A673 (cell line): ENCODE measurements at regions of chr2 and their contacts with region 1.

Region 1: DNA sequence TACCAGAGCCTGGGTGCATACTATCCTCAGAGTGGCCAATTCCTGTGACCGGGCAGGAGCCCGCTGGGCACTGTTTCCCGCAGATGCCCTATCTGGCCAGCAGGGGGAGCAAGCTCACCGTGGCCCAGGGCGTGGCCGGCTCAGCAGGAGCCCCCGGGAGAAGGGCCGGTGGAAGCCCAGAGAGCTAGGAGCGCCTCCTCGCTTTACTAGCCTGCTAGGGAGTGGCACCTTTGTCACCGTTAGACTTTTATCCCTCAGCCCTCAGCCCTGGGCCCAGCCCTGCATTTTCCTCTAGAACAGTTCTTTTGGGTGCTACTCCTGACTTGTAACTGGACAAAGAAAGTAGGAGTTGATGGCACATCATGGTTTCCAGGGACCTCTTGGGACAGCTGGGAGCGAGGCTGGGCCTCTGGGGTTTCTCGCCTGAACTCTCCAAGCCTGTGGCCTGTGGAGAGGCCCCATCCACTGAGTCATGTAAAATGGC is 24.0 kb downstream of the TMEM177 start:
- DNase-seq: peak; percentile 74
- H3K4me3 ChIP-seq: no peak overlapping the region
- H3K27ac ChIP-seq: no peak overlapping the region
- H3K4me1 ChIP-seq: peaks cover 5% of the 10 kb centered on the region
- H3K27me3 ChIP-seq: no peaks in the 10 kb centered on the region
- CTCF ChIP-seq: peak; percentile 95

Region 2: DNA sequence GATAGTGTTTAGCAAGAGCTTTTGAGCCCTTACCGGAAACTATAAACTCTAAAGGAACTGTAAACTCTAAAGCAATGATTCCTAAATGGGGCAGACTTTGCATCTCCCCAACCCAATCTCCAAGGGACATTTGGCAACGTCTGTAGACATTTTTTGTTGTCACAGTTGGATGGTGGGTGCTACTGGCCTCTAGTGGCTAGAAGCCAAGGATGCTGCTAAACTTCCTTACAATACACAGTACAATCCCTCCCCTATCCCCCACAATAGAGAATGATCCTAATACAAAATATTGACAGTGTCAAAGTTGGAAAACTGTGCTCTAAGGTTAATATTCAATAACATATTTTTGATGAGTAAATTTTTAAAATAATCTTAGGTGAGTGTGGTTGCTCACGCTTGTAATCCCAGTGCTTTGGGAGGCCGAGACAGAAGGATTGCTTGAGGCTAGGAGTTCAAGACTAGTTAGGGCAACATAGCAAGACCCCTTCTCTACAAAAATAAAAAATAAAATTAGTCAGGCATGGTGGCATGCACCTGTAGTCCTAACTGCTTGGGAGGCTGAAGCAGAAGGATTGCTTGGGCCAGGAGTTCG is 123.5 kb after region 1 on chr2:
- CTCF ChIA-PET with region 1: interaction called, 5 read pairs
- POLR2A ChIA-PET with region 1: no interaction called
- intact Hi-C with region 1: loop called (anchors 5 kb)
- DNase-seq: peak; percentile 84
- H3K4me3 ChIP-seq: no peak overlapping the region
- H3K27ac ChIP-seq: peak overlapping the region; percentile 0
- H3K4me1 ChIP-seq: peaks cover 12% of the 10 kb centered on the region
- H3K27me3 ChIP-seq: no peaks in the 10 kb centered on the region
- CTCF ChIP-seq: peak; percentile 81

Region 3: GRCh38 chr2:119897736-119898395 is 194.9 kb after region 1 on chr2:
- CTCF ChIA-PET with region 1: no interaction called
- POLR2A ChIA-PET with region 1: no interaction called
- intact Hi-C with region 1: no loop called
- DNase-seq: no peak
- H3K4me3 ChIP-seq: no peak overlapping the region
- H3K27ac ChIP-seq: no peak overlapping the region
- H3K4me1 ChIP-seq: peaks cover 5% of the 10 kb centered on the region
- H3K27me3 ChIP-seq: no peaks in the 10 kb centered on the region
- CTCF ChIP-seq: no peak

Region 4: GRCh38 chr2:120012771-120013596 is 310.0 kb after region 1 on chr2 and contains the start of gene EPB41L5:
- CTCF ChIA-PET with region 1: no interaction called
- POLR2A ChIA-PET with region 1: no interaction called
- intact Hi-C with region 1: loop called (anchors 5 kb)
- DNase-seq: peak; percentile 98
- H3K4me3 ChIP-seq: peak within 1 kb of the TSS; percentile 74
- H3K27ac ChIP-seq: peak within 1 kb of the TSS; percentile 91
- H3K4me1 ChIP-seq: peaks cover 7% of the 10 kb centered on the region
- H3K27me3 ChIP-seq: no peaks in the 10 kb centered on the region
- CTCF ChIP-seq: no peak
- total RNA-seq, gene EPB41L5: 25.8 and 26.5 TPM in 2 replicates

Region 5: GRCh38 chr2:120109186-120110061 is 406.5 kb after region 1 on chr2:
- CTCF ChIA-PET with region 1: no interaction called
- POLR2A ChIA-PET with region 1: no interaction called
- intact Hi-C with region 1: loop called (anchors 5 kb)
- DNase-seq: peak; percentile 57
- H3K4me3 ChIP-seq: no peak overlapping the region
- H3K27ac ChIP-seq: no peak overlapping the region
- H3K4me1 ChIP-seq: no peaks in the 10 kb centered on the region
- H3K27me3 ChIP-seq: no peaks in the 10 kb centered on the region
- CTCF ChIP-seq: peak; percentile 74

Region 6: DNA sequence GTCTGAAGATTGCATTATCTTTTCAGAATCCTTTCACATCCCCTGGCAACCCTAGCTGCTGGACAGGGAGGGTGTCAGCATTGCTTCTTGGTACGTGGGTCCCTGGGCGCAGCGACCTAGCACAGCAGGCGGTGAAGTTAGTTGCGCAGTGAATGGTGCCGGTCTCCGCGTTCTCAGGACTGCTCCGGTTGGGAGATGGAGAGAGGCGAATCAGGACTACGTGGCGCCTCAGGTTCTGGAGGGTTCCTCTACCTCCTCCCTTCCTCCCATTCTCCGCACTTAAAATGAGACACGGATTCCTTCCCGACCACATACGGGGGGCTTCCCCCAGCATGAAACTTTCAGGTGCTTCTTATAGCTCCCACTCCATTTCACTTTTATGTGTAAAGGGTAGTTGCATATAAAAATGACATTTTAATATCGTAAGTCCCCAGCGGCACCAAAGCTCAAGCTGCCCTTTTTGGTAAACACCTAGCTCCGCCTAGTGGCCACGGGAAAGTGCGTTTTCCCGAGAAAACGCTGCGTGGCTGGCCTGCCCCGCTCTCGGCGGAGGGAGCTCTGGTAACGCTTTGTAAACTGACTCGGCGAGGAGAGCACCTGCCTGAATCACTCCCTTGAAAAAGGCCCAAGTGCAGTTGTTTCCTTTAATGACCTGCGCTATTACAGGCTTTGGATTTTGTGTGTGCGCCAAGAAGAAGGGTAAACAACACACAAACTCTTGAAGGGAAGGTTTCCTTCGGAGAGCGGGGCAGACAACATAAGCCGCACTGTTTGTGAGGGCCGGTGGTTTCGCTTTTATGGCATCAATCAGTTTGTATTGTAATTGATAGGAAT is 610.1 kb after region 1 on chr2:
- CTCF ChIA-PET with region 1: interaction called, 4 read pairs
- POLR2A ChIA-PET with region 1: no interaction called
- intact Hi-C with region 1: loop called (anchors 2 kb)
- DNase-seq: peak; percentile 85
- H3K4me3 ChIP-seq: peak overlapping the region; percentile 50
- H3K27ac ChIP-seq: no peak overlapping the region
- H3K4me1 ChIP-seq: no peaks in the 10 kb centered on the region
- H3K27me3 ChIP-seq: no peaks in the 10 kb centered on the region
- CTCF ChIP-seq: peak; percentile 94